Activated CD4-positive, alpha-beta memory T cell treated with anti-CD3 and anti-CD28 coated beads, Interleukin-2, amount 10 ng/mL, durations not matched to agents 7 days and 5 days (primary cell): ENCODE measurements at regions of chrX and their contacts with region 1.

Region 1: DNA sequence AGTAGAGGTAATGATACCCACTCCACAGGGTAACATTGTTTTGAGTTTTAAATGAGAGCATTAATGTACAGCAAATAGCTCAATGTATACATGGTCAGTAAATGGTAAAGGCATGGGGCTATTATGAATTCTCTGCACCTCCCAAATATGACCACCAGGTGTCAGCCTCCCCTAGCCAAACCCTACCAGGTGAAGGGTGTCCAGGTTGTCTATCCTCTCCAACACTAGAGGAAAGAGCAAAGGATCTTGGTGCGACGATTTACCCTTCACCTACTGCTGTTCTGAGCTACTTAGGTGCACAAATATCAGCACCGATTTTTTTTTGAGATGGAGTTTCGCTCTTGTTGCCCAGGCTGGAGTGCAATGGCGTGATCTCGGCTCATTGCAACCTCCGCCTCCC is 26.5 kb upstream of the XIAP start:
- DNase-seq: peak; percentile 67
- H3K4me3 Mint-ChIP-seq: no peak overlapping the region
- H3K27ac Mint-ChIP-seq: no peak overlapping the region
- H3K4me1 Mint-ChIP-seq: peaks cover 7% of the 10 kb centered on the region
- H3K27me3 Mint-ChIP-seq: peaks cover 7% of the 10 kb centered on the region

Region 2: DNA sequence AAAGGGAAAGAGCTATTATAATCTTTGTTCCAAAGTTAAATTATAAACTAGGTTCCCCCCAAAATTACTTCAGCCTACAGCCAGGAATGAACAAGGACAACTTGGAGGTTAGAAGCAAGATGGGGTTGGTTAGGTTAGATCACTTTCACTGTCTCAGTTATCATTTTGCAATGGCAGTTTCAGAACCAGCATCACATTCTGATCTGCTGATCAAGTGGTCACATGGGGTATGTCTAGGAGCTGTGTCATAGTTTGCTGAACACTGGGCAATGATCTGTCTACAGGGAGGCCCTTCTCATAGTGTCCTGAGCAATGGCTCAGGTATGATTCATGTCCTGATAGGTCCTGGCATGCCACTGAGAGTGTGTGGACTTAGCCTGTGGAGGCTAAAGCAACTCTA is 15.1 kb before region 1 on chrX:
- CTCF ChIA-PET with region 1: interaction called, 10 read pairs
- POLR2A ChIA-PET with region 1: no interaction called
- DNase-seq: no peak
- H3K4me3 Mint-ChIP-seq: no peak overlapping the region
- H3K27ac Mint-ChIP-seq: no peak overlapping the region
- H3K4me1 Mint-ChIP-seq: peaks cover 4% of the 10 kb centered on the region
- H3K27me3 Mint-ChIP-seq: no peaks in the 10 kb centered on the region

Region 3: GRCh38 chrX:123869488-123869887 is 36.1 kb after region 1 on chrX:
- CTCF ChIA-PET with region 1: interaction called, 14 read pairs
- POLR2A ChIA-PET with region 1: no interaction called
- DNase-seq: no peak
- H3K4me3 Mint-ChIP-seq: no peak overlapping the region
- H3K27ac Mint-ChIP-seq: no peak overlapping the region
- H3K4me1 Mint-ChIP-seq: peaks cover 21% of the 10 kb centered on the region
- H3K27me3 Mint-ChIP-seq: no peaks in the 10 kb centered on the region